Activated CD4-positive, alpha-beta memory T cell treated with anti-CD3 and anti-CD28 coated beads, Interleukin-2, amount 10 ng/mL, durations not matched to agents 7 days and 5 days (primary cell): ENCODE measurements at regions of chr6 and their contacts with region 1.

Region 1: DNA sequence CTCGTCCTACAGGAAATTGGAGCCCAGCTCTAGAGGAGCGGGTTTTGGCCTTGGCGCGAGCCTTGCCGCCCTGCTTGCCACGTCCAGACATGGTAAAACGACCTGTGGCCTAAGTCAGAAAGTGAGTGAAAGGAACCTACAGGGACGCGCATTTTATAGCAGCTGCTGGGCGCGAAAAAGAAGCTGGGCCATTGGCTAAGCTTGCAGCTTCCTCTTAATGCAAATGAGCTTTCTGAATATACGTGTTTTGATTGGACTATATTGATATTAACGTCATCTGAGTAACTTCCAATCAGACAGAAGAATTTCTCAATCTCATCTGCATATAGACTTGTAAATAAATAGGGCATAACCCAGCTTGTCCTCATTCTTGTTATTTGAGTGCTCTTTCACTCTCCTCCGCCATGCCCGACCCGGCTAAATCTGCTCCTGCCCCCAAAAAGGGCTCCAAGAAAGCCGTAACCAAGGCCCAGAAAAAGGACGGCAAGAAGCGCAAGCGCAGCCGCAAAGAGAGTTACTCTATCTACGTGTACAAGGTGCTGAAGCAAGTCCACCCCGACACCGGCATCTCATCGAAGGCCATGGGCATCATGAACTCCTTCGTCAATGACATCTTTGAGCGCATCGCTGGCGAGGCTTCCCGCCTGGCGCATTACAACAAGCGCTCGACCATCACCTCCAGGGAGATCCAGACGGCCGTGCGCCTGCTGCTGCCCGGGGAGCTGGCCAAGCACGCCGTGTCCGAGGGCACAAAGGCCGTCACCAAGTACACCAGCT is 18.9 kb downstream of the OR2B2 start:
- DNase-seq: peak; percentile 95
- H3K4me3 Mint-ChIP-seq: no peak overlapping the region
- H3K27ac Mint-ChIP-seq: no peak overlapping the region
- H3K4me1 Mint-ChIP-seq: peaks cover 54% of the 10 kb centered on the region
- H3K27me3 Mint-ChIP-seq: no peaks in the 10 kb centered on the region

Region 2: DNA sequence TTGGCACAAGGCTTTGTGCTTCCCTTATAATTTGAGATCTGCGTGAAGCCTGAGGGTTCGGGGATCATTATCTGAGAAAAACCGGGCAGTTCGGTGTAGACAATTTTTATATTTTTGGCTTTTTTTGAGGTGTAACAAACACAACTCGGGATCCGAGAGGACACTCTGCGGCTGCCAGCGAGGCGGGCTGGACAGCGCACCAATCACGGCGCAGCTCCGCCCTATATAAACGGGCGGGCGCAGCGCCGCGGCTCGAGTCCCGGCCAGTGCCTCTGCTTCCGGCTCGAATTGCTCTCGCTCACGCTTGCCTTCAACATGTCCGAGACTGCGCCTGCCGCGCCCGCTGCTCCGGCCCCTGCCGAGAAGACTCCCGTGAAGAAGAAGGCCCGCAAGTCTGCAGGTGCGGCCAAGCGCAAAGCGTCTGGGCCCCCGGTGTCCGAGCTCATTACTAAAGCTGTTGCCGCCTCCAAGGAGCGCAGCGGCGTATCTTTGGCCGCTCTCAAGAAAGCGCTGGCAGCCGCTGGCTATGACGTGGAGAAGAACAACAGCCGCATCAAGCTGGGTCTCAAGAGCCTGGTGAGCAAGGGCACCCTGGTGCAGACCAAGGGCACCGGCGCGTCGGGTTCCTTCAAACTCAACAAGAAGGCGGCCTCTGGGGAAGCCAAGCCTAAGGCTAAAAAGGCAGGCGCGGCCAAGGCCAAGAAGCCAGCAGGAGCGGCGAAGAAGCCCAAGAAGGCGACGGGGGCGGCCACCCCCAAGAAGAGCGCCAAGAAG is 1737.0 kb before region 1 on chr6:
- CTCF ChIA-PET with region 1: no interaction called
- POLR2A ChIA-PET with region 1: interaction called, 27 read pairs
- DNase-seq: peak; percentile 91
- H3K4me3 Mint-ChIP-seq: peak overlapping the region; percentile 95
- H3K27ac Mint-ChIP-seq: peak overlapping the region; percentile 98
- H3K4me1 Mint-ChIP-seq: peaks cover 45% of the 10 kb centered on the region
- H3K27me3 Mint-ChIP-seq: no peaks in the 10 kb centered on the region

Region 3: GRCh38 chr6:26270903-26271667 is 1622.2 kb before region 1 on chr6:
- CTCF ChIA-PET with region 1: no interaction called
- POLR2A ChIA-PET with region 1: interaction called, 25 read pairs
- DNase-seq: peak; percentile 87
- H3K4me3 Mint-ChIP-seq: no peak overlapping the region
- H3K27ac Mint-ChIP-seq: no peak overlapping the region
- H3K4me1 Mint-ChIP-seq: peaks cover 35% of the 10 kb centered on the region
- H3K27me3 Mint-ChIP-seq: no peaks in the 10 kb centered on the region

Region 4: GRCh38 chr6:27157459-27158315 is 735.6 kb before region 1 on chr6:
- CTCF ChIA-PET with region 1: interaction called, 5 read pairs
- POLR2A ChIA-PET with region 1: interaction called, 16 read pairs
- DNase-seq: peak; percentile 84
- H3K4me3 Mint-ChIP-seq: peak overlapping the region; percentile 69
- H3K27ac Mint-ChIP-seq: peak overlapping the region; percentile 69
- H3K4me1 Mint-ChIP-seq: peaks cover 52% of the 10 kb centered on the region
- H3K27me3 Mint-ChIP-seq: no peaks in the 10 kb centered on the region

Region 5: GRCh38 chr6:27795697-27796494 is 97.4 kb before region 1 on chr6:
- CTCF ChIA-PET with region 1: interaction called, 29 read pairs
- POLR2A ChIA-PET with region 1: interaction called, 35 read pairs
- DNase-seq: peak; percentile 40
- H3K4me3 Mint-ChIP-seq: no peak overlapping the region
- H3K27ac Mint-ChIP-seq: no peak overlapping the region
- H3K4me1 Mint-ChIP-seq: peaks cover 51% of the 10 kb centered on the region
- H3K27me3 Mint-ChIP-seq: peaks cover 16% of the 10 kb centered on the region

Region 6: DNA sequence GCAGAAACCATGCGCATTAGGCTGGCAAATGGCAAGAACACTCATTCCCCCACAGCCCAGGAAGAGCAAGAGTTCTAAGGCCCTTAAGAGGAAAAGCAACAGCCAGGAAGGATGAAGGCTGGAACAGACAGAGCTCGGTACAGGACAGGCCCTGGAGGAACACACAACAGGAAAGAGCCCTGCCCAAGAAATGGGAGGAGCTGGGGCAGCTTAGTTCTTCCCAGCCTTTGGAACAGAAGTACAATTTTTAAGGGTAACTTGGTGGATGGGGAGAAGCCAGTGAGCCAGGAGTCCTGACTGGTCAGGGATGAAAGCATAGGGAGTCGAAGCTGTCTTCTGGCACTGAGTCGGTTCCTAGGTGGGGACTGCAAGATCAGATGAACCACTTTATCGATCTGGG is 13.4 kb before region 1 on chr6:
- CTCF ChIA-PET with region 1: interaction called, 190 read pairs
- POLR2A ChIA-PET with region 1: interaction called, 1,597 read pairs
- DNase-seq: no peak
- H3K4me3 Mint-ChIP-seq: no peak overlapping the region
- H3K27ac Mint-ChIP-seq: peak overlapping the region; percentile 21
- H3K4me1 Mint-ChIP-seq: peaks cover 8% of the 10 kb centered on the region
- H3K27me3 Mint-ChIP-seq: no peaks in the 10 kb centered on the region

Region 7: DNA sequence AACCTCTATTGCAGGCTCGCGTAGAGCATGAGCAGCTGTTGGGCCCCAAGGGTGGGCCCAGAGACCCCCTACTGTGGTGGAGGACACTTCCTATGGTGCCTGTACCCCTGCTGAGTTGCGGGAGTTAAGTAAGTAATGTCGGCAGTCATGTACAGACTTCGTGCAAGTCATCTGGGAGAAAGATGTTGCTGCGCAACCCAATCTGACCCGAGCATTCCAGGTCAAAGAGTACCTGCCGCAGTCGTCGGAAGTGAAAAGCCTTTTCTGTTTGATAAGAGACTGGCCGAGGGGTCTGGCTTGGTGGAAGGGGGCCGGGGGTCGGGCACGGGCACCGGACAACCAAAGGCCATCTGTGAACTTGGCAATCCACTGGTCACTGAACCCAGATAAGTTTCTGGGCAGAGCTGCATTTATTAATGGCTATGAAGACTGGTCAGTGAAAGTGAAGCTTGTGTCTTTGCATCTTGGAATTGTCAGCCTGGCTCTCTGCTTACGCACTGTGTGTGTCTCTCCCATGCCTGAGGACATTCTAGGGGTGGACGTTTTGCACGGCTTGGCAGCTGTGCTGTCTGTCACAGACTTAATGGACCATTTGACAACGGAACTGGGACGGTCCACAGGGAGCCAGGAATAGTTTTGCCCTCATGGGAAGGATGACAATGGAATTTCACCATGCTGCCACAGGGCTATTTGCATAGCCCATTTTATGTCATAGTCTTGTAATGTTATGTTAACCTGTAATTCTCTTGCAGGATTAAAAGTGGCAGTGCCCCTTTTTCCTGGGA is 108.3 kb after region 1 on chr6:
- CTCF ChIA-PET with region 1: no interaction called
- POLR2A ChIA-PET with region 1: no interaction called
- DNase-seq: no peak
- H3K4me3 Mint-ChIP-seq: no peak overlapping the region
- H3K27ac Mint-ChIP-seq: no peak overlapping the region
- H3K4me1 Mint-ChIP-seq: no peaks in the 10 kb centered on the region
- H3K27me3 Mint-ChIP-seq: peaks cover 12% of the 10 kb centered on the region

Region 8: DNA sequence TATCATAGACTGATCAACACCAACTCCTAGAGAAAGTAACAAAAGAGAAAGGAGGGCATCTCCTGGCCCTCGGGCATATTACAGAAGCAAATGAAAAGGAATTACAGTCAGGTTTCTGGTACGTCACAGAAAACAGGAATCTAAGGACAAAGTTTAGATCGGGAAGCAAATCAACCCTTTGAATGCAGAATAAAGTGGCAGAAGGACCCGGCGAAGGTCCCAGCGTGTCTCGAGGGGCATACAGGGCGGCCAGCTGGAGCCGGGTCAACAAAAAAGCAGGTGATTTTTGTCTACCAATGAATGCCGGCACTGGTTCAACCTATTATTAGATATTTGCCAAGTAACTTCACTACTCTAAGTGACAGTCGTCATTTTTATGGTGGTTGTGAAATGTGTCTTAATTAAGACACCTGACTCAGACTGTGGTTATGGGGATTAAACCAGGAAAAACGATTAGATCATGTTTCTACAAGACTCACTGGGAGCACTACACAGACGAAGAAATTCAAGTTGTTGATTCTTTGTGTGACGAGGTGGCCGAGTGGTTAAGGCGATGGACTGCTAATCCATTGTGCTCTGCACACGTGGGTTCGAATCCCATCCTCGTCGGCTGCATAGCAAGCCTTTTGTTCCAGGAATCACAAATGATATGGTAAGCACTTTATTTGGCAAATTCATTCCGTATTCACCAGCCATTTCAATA is 319.4 kb after region 1 on chr6:
- CTCF ChIA-PET with region 1: no interaction called
- POLR2A ChIA-PET with region 1: no interaction called
- DNase-seq: peak; percentile 42
- H3K4me3 Mint-ChIP-seq: peak overlapping the region; percentile 55
- H3K27ac Mint-ChIP-seq: no peak overlapping the region
- H3K4me1 Mint-ChIP-seq: peaks cover 34% of the 10 kb centered on the region
- H3K27me3 Mint-ChIP-seq: peaks cover 80% of the 10 kb centered on the region